Activated CD4-positive, alpha-beta memory T cell treated with anti-CD3 and anti-CD28 coated beads for 36 hours (primary cell): ENCODE measurements at regions of chr14 and their contacts with region 1.

Region 1: DNA sequence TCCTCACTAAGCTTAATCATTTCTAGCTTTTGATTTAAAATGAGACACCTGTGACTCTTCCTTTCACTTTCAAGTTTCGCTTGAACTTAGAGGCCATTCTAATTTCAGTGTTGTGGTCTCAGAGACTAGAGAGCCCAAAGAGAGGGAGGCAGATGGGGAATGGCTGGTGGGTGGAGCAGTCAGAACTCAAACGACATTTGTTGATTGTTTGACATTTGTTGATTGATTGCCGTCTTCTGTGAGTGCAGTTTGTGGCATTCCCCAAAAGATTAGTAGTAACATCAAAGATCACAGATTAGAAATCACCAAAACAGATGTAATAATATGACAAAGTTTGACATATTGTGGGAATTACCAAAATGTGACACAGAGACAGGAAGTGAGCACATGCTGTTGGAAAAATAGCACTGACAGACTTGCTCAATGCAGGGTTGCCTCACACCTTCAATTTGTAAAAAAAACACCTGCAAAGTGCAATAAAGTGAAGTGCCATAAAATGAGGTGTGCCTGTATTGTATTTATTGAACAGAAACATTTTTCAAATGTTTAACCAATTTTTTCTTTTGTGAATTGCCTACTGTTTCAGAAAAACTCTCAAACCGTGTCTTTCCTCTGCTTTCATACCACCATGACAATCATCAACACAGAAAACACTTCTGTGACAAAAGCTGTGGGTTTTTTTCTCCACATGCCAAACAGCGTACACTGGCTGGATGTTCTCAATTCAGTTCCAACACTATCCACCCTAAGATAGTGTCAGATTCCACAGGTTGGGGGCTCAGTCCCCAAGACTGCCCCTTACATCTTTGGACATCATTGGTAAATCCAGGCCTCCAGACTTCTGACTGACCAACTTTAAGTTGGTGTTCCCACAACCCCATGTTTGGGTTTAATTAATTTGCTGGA is 376.3 kb upstream of the RGS6 start:
- DNase-seq: peak; percentile 76
- H3K4me3 Mint-ChIP-seq: peak overlapping the region; percentile 55
- H3K27ac Mint-ChIP-seq: peak overlapping the region; percentile 98
- H3K4me1 Mint-ChIP-seq: peaks cover 75% of the 10 kb centered on the region
- H3K27me3 Mint-ChIP-seq: no peaks in the 10 kb centered on the region

Region 2: GRCh38 chr14:71221119-71221518 is 334.8 kb before region 1 on chr14:
- CTCF ChIA-PET with region 1: no interaction called
- POLR2A ChIA-PET with region 1: interaction called, 4 read pairs
- intact Hi-C with region 1: loop called (anchors 1 kb)
- DNase-seq: no peak
- H3K4me3 Mint-ChIP-seq: no peak overlapping the region
- H3K27ac Mint-ChIP-seq: no peak overlapping the region
- H3K4me1 Mint-ChIP-seq: peaks cover 24% of the 10 kb centered on the region
- H3K27me3 Mint-ChIP-seq: no peaks in the 10 kb centered on the region

Region 3: GRCh38 chr14:71320107-71320733 is 235.7 kb before region 1 on chr14:
- CTCF ChIA-PET with region 1: interaction called, 3 read pairs
- POLR2A ChIA-PET with region 1: interaction called, 14 read pairs
- intact Hi-C with region 1: loop called (anchors 1 kb)
- DNase-seq: peak; percentile 99
- H3K4me3 Mint-ChIP-seq: peak within 1 kb of the TSS; percentile 88
- H3K27ac Mint-ChIP-seq: peak within 1 kb of the TSS; percentile 85
- H3K4me1 Mint-ChIP-seq: peaks cover 37% of the 10 kb centered on the region
- H3K27me3 Mint-ChIP-seq: no peaks in the 10 kb centered on the region

Region 4: GRCh38 chr14:71414631-71415403 is 141.1 kb before region 1 on chr14:
- CTCF ChIA-PET with region 1: no interaction called
- POLR2A ChIA-PET with region 1: no interaction called
- intact Hi-C with region 1: loop called (anchors 1 kb)
- DNase-seq: no peak
- H3K4me3 Mint-ChIP-seq: no peak overlapping the region
- H3K27ac Mint-ChIP-seq: no peak overlapping the region
- H3K4me1 Mint-ChIP-seq: peaks cover 30% of the 10 kb centered on the region
- H3K27me3 Mint-ChIP-seq: no peaks in the 10 kb centered on the region

Region 5: DNA sequence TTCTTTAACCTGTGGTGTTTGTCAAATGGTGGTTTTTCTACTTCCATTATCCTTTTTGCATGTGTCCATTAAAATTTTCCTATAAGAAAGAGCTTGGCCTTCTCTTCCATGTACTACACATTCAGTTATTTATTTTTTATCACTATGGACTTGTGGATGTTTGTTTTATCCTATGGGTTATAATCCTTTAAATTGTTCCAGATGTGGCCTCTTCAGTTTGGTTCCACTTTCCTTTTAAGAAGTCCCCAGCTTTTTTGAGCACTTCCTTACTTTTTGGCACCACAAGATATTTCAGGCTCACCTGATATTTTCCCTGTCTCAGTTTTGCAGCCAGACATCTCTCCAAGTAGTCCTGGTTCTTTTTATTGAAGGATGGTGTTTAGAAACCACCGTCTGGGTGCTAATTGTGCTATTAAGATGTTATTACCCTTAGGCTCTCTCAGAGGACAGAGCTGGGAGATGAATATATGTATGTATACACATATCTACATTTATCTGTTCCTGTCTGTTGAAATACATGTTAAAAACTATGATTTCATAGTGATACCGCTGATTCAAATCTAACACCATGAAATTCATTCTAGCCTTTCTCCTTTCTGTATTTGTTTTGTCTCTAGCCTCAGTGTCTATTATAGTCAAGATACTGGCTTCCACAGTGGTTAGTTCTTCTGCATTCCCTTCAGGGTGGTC is 32.1 kb before region 1 on chr14:
- CTCF ChIA-PET with region 1: no interaction called
- POLR2A ChIA-PET with region 1: no interaction called
- intact Hi-C with region 1: loop called (anchors 1 kb)
- DNase-seq: no peak
- H3K4me3 Mint-ChIP-seq: no peak overlapping the region
- H3K27ac Mint-ChIP-seq: no peak overlapping the region
- H3K4me1 Mint-ChIP-seq: peaks cover 14% of the 10 kb centered on the region
- H3K27me3 Mint-ChIP-seq: no peaks in the 10 kb centered on the region